Right cardiac atrium (tissue), 5 donors: ENCODE measurements at regions of chr14 and their contacts with region 1.

Region 1: DNA sequence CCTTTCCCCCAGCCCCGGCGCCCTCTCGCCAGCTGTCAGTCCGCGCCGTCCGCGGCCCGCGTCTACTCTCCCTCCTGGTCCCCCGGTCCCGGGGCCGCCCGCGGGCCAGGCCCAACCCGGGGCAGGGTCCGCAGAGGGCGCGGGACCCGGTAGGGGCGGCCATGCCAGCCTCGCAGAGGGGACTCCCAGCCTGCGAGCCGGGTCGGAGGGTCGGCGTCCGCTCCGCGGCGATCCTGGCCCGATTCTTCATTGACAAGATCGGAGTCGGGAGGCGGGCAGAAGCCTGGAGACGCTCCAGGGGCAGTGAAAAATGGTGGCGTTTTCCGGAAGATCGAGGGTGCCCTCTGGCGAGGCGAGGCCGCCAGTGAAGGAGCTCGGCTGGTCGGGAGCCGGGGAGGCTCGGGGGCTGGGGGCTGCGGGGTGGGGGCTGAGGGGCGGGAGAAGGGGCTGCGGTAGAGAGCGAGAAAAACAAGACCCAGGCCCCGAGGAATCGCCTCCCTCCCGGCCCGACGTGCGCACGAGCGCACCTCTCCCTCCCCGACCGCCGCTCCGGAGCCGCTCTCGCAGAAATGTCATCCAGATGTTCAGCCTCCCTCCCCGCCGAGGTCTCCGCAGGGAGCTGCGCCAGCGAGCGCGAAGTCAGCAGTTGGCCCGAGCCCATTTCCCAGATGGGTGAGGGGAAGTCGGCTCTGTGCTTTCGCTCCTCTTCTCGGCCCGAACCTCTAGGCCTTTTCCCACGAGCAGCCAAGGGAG is 647 bp upstream of the TGFB3 start:
- DNase-seq: peak; percentile 87 to 95 (median 94)
- ATAC-seq: peak; percentile 71 to 75
- H3K4me3 ChIP-seq: peak overlapping the region; percentile 70
- H3K27ac ChIP-seq: peak overlapping the region; percentile 95
- H3K4me1 ChIP-seq: peaks cover 13% of the 10 kb centered on the region
- H3K27me3 ChIP-seq: no peaks in the 10 kb centered on the region

Region 2: DNA sequence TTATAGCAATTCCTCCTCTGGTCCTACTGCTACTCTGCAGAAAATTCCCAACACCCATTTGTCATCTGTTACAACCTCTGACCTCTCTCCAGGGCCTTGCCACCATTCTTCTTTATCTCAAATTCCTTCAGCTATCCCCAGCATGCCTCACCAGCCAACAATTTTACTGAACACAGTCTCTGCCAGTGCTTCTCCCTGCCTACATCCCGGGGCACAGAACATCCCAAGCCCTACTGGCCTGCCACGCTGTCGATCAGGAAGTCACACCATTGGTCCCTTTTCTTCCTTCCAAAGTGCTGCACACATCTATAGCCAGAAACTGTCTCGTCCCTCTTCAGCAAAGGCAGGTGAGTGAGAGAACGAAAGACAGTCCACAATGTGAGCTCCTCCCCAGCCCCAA is 199.3 kb before region 1 on chr14:
- intact Hi-C with region 1: loop called in 1 of 4 experiments (anchors 10 kb)
- DNase-seq: peak in 2 of 3 donors; percentile 63 to 66
- ATAC-seq: peak; percentile 82 to 92
- H3K4me3 ChIP-seq: no peak overlapping the region
- H3K27ac ChIP-seq: peak overlapping the region; percentile 54
- H3K4me1 ChIP-seq: peaks cover 3% of the 10 kb centered on the region
- H3K27me3 ChIP-seq: no peaks in the 10 kb centered on the region

Region 3: DNA sequence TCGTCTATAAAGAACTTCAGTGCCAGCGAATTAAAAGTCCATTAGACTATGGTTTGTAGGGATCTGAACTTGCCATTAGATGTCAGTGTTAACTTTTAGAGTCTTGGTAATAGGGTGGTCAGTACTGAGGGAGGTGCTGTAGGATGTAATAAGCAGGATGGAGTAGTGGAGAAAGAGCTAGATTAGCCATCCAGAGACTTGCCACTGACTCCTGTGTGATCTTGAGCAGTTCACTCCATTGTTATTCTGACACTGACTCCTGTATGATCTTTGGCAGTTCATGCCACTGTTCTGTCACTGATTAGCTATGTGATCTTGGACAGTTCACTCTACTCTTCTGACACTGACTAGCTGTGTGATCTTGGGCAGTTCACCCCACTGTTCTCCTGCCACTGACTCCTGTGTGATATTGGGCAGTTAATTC is 187.8 kb before region 1 on chr14:
- intact Hi-C with region 1: loop called in 2 of 4 experiments (anchors 5 to 10 kb)
- DNase-seq: no peak
- ATAC-seq: peak; percentile 95
- H3K4me3 ChIP-seq: no peak overlapping the region
- H3K27ac ChIP-seq: peak overlapping the region; percentile 43
- H3K4me1 ChIP-seq: peaks cover 3% of the 10 kb centered on the region
- H3K27me3 ChIP-seq: no peaks in the 10 kb centered on the region

Region 4: DNA sequence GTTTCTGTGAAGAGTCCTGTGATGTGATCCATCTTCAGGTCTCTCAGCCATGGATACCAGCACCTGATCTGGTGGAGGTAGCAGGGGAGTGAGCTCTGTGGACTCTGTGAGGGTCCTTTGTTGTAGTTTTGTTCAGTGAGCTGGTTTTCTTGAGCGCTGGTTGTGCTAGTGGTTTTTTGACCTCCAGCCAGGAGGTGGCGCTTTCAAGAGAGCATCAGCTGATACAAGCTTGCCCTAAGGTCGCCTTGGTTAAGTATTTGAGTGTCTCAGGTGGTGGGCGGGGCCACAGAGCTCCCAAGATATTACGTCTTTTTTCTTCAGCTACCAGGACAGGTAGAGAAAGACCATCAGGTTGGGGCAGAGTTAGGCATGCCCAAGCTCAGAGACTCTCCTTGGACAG is 181.7 kb before region 1 on chr14:
- intact Hi-C with region 1: loop called in 2 of 4 experiments (anchors 5 to 10 kb)
- DNase-seq: no peak
- ATAC-seq: no peak
- H3K4me3 ChIP-seq: no peak overlapping the region
- H3K27ac ChIP-seq: no peak overlapping the region
- H3K4me1 ChIP-seq: no peaks in the 10 kb centered on the region
- H3K27me3 ChIP-seq: no peaks in the 10 kb centered on the region

Region 5: GRCh38 chr14:75906676-75907280 is 75.7 kb before region 1 on chr14:
- intact Hi-C with region 1: loop called in 3 of 4 experiments (anchors 2 to 5 kb)
- DNase-seq: peak in 2 of 3 donors; percentile 37 to 63
- ATAC-seq: peak; percentile 59 to 68
- H3K4me3 ChIP-seq: no peak overlapping the region
- H3K27ac ChIP-seq: no peak overlapping the region
- H3K4me1 ChIP-seq: peaks cover 3% of the 10 kb centered on the region
- H3K27me3 ChIP-seq: no peaks in the 10 kb centered on the region

Region 6: DNA sequence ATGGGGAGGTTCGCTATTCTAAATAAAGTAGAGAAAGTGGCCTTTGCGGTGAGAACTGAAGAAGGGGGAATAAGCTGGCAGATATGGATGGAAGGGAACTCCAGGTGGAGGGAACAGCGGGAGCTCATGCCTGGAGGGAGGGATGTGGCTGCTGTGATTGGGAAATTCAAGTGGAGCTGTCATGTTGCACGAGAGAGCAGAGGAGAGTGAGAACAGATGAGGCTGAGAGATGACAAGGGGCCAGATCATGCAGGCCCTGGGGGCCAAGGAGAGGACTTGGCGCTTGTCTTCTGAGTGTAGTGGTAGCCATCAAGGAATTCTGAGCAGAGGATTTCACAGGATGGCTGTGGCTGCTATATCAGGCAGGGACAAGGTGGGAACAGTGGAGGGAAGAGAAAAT is 35.7 kb before region 1 on chr14:
- intact Hi-C with region 1: no loop called
- DNase-seq: no peak
- ATAC-seq: no peak
- H3K4me3 ChIP-seq: no peak overlapping the region
- H3K27ac ChIP-seq: no peak overlapping the region
- H3K4me1 ChIP-seq: peaks cover 2% of the 10 kb centered on the region
- H3K27me3 ChIP-seq: no peaks in the 10 kb centered on the region